HepG2 (cell line): ENCODE measurements at regions of chr2 and their contacts with region 1.

Region 1: DNA sequence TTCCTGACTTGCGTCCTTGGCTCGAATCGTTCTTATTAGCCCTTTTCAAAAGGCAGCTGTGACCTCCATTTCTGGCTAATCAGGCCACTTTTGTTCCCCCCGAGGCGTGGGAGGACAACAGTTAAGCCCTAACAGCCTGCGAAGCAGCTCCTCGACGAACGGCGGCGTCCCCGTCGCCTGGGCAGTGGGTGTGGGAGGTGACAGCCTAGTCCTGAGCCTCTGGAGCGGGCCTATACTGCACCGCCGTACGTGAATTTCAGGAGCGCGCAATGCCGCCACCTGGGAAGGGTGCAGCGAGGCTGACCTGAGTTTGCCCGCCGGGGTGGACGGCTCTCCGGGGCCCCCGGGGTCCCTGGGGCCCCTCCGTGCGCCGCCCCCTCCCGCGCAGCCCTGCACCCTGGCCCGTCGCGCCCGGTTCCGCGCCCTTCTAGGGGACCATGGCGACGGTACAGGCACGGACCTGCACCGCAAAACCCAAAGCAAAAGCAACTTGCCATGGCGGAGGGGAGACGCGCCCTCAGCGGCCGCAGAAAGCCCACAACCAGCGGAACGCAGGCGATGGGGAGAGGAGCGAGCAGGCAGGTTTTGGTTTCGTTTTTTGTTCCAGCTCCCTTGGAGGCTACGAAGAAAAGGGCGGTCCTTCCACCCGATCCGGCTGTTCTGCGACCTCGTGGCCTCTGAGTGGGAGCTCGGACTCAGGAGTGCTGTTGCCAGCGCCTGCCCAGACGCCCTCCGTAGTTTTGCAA is at the start of gene RBM43:
- DNase-seq: peak; percentile 44
- ATAC-seq: peak; percentile 94
- H3K4me3 ChIP-seq: peak within 1 kb of the TSS; percentile 73 to 82 (median 81)
- H3K27ac ChIP-seq: no peak within 1 kb of the TSS
- H3K4me1 ChIP-seq: peaks cover 28% of the 10 kb centered on the region
- H3K27me3 ChIP-seq: peaks cover 2 to 23% of the 10 kb centered on the region in 2 experiments; a peak in 4 of 5 replicates
- CTCF ChIP-seq: peak; percentile 43
- EP300 ChIP-seq: peak in 1 of 2 experiments; percentile 65; a peak in 1 of 4 replicates
- POLR2A ChIP-seq: peak in 1 of 2 experiments; percentile 22; a peak in 1 of 4 replicates
- RAD21 ChIP-seq: no peak
- total RNA-seq, gene RBM43: 0.31 and 0.52 TPM in 2 replicates

Region 2: GRCh38 chr2:151277067-151277466 is 15.7 kb after region 1 on chr2:
- CTCF ChIA-PET with region 1: no interaction called
- POLR2A ChIA-PET with region 1: no interaction called
- in situ Hi-C with region 1: no loop called
- intact Hi-C with region 1: no loop called
- DNase-seq: no peak
- ATAC-seq: no peak
- H3K4me3 ChIP-seq: no peak overlapping the region
- H3K27ac ChIP-seq: no peak overlapping the region
- H3K4me1 ChIP-seq: no peaks in the 10 kb centered on the region
- H3K27me3 ChIP-seq: no peaks in the 10 kb centered on the region
- CTCF ChIP-seq: no peak
- EP300 ChIP-seq: no peak
- POLR2A ChIP-seq: no peak
- RAD21 ChIP-seq: no peak

Region 3: DNA sequence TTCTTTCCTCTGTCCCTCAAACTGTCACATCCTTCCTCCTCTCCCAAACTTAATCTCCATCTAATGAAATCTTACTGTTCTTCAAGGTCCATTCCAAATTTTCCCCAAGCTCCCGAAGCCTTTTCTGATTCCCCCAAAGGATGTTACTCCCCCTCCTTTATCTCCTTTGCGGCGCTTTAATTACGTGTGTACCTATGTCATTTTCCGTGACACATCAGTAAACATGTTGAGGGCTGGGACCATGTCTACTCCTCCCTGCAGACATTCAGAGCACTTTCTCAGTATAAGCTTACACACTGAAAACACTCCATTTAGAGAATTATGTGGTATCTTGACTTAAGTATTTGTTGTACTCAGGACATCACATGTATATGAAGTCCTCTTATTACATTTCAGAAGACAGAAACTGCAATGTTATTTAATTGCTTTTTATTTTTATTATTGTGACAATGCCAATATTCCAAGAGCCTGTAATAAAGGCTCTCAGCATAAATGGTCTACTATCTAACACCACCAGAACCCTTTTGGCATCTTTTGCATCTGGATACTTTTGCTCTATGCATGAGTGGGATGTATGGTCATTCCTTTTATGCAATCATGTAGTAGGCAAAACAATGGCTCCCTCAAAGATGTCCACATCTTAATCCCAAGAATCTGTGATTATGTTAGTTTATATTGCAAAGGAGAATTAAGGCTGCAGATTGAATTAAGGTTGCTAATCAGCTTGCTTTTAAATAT is 26.3 kb after region 1 on chr2:
- CTCF ChIA-PET with region 1: no interaction called
- POLR2A ChIA-PET with region 1: interaction called, 7 read pairs
- in situ Hi-C with region 1: no loop called
- intact Hi-C with region 1: loop called (anchors 2 kb)
- DNase-seq: no peak
- ATAC-seq: no peak
- H3K4me3 ChIP-seq: no peak overlapping the region
- H3K27ac ChIP-seq: no peak overlapping the region
- H3K4me1 ChIP-seq: peaks cover 9% of the 10 kb centered on the region; the same call in 1 of the 2 replicates
- H3K27me3 ChIP-seq: peaks cover 0 to 12% of the 10 kb centered on the region in 2 experiments; a peak in 2 of 5 replicates
- CTCF ChIP-seq: no peak
- EP300 ChIP-seq: no peak
- POLR2A ChIP-seq: no peak
- RAD21 ChIP-seq: no peak

Region 4: DNA sequence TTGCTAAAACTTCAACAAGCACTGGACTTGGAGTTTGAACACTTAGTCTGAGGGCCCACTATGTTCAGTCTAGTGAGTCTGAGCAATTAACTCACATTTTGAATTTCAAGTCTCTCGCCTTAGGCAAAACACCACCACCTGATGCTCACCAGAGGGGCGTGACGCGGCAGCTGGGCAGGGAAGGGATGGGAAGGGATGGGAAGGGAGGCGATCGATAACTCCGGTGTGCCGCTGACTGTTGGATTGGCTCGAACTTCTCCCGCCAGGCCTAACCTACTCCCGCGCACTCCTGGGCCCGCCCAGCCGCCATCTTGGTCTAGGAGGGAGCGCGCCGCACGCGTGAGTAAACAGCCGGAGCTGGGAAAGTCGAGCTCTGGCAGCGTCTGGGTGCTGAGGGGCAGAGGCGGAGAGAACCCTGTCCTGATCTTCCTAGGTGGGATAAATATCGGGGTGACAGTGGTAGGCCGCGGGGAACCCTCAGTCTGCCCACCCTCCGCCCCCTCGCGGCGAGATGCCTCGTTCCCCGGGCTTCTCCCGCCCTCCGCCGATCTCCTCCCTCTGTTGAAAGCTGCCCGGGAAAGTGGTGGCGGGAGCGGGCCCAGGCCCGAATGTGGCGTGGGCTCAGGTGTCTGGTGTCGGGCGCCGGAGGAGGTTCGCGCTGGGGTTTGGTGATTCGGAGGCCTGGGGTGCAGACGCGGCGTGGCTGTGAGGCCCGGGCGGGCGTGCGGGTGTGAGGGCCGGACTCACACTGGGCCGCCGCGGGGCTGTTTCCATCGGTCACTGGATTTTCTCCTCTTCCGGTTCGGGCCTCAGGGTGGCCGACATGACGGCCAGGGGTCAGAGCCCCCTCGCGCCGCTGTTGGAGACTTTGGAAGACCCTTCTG is 148.4 kb after region 1 on chr2 and contains the start of gene RIF1:
- CTCF ChIA-PET with region 1: no interaction called
- POLR2A ChIA-PET with region 1: no interaction called
- in situ Hi-C with region 1: no loop called
- intact Hi-C with region 1: loop called (anchors 2 kb)
- DNase-seq: peak; percentile 92
- ATAC-seq: peak; percentile 97
- H3K4me3 ChIP-seq: peak within 1 kb of the TSS; percentile 81 to 99 (median 85)
- H3K27ac ChIP-seq: peak within 1 kb of the TSS; percentile 92
- H3K4me1 ChIP-seq: peaks cover 36% of the 10 kb centered on the region
- H3K27me3 ChIP-seq: no peaks in the 10 kb centered on the region
- CTCF ChIP-seq: peak; percentile 73
- EP300 ChIP-seq: no peak
- POLR2A ChIP-seq: peak; percentile 84 to 89
- RAD21 ChIP-seq: peak; percentile 46
- total RNA-seq, gene RIF1: 73.6 and 115 TPM in 2 replicates